ENCODE measurements at regions of chr11 and their contacts with region 1.

Region 1: GRCh38 chr11:129364143-129364654 is 11.4 kb upstream of the BARX2 start:
- DNase-seq: peak; percentile 96
- ATAC-seq: peak; percentile 90
- H3K4me3 ChIP-seq: peak overlapping the region; percentile 33; the same call in 1 of the 2 replicates
- H3K27ac ChIP-seq: no peak overlapping the region
- H3K4me1 ChIP-seq: peaks cover 31% of the 10 kb centered on the region
- H3K27me3 ChIP-seq: peaks cover 26% of the 10 kb centered on the region; the same call in 1 of the 2 replicates
- CTCF ChIP-seq: peak; percentile 100

Region 2: DNA sequence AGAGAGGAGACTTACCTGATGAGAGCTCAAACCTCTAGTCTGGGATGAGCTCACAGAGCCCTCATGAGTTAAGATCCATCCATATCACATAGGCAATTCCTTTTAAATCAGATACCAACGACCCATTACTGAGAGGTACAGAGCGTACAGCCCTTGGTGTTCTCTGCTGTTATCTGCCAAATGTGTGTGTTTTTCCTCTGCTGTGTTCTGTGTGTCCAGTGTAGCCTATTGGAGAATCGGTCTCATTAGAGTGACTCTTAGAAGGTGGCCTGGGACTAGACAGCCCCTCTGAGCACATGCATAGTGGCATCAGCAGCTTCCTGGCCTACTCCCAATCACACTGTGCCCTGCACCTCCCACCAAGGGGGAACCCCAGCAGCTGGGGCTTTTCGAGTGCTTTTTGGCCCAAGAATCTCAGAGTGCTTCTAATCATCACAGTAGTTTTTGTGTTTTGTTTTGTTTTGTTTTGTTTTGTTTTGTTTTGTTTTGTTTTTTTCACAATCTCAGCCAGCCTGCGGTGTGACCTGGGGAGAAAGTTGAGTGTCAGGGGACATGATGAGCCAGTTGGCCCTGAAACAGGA is 447.0 kb before region 1 on chr11:
- CTCF ChIA-PET with region 1: no interaction called
- POLR2A ChIA-PET with region 1: no interaction called
- intact Hi-C with region 1: no loop called
- DNase-seq: no peak
- ATAC-seq: no peak
- H3K4me3 ChIP-seq: no peak overlapping the region
- H3K27ac ChIP-seq: no peak overlapping the region
- H3K4me1 ChIP-seq: no peaks in the 10 kb centered on the region
- H3K27me3 ChIP-seq: peaks cover 37% of the 10 kb centered on the region
- CTCF ChIP-seq: no peak

Region 3: GRCh38 chr11:129333873-129334272 is 30.3 kb before region 1 on chr11:
- CTCF ChIA-PET with region 1: no interaction called
- POLR2A ChIA-PET with region 1: no interaction called
- intact Hi-C with region 1: no loop called
- DNase-seq: peak; percentile 30
- ATAC-seq: no peak
- H3K4me3 ChIP-seq: no peak overlapping the region
- H3K27ac ChIP-seq: no peak overlapping the region
- H3K4me1 ChIP-seq: peaks cover 11% of the 10 kb centered on the region; the same call in 1 of the 2 replicates
- H3K27me3 ChIP-seq: no peaks in the 10 kb centered on the region
- CTCF ChIP-seq: peak; percentile 39; the same call in 1 of the 2 replicates

Region 4: GRCh38 chr11:129639300-129639699 is 275.1 kb after region 1 on chr11:
- CTCF ChIA-PET with region 1: interaction called, 3 read pairs
- POLR2A ChIA-PET with region 1: interaction called, 4 read pairs
- intact Hi-C with region 1: loop called (anchors 2 kb)
- DNase-seq: peak; percentile 99
- ATAC-seq: peak; percentile 65
- H3K4me3 ChIP-seq: 0 out of 2 replicates have a peak overlapping the region, but pooled peaks have one; percentile 13
- H3K27ac ChIP-seq: peak overlapping the region; percentile 92
- H3K4me1 ChIP-seq: peaks cover 68% of the 10 kb centered on the region
- H3K27me3 ChIP-seq: no peaks in the 10 kb centered on the region
- CTCF ChIP-seq: no peak

Region 5: DNA sequence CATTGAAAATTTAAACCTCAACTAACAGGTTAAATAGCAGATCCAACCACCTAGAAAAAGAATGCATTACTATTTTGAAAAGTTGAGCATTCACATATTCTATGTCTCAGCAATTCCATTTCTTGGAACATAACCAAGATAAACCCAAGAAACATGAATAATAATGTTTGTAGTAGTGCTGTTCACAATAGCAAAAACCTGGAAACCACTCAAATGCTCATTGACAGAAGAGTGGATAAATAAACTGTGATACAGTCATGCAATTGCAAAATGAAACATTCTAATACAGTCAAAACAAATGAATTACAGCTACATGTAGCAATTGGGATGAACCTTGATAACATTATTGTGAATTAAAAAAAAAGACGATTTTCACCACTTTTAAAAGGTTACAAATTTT is 288.6 kb after region 1 on chr11:
- CTCF ChIA-PET with region 1: no interaction called
- POLR2A ChIA-PET with region 1: no interaction called
- intact Hi-C with region 1: loop called (anchors 2 kb)
- DNase-seq: peak; percentile 98
- ATAC-seq: peak; percentile 99
- H3K4me3 ChIP-seq: no peak overlapping the region
- H3K27ac ChIP-seq: peak overlapping the region; percentile 22
- H3K4me1 ChIP-seq: peaks cover 16% of the 10 kb centered on the region
- H3K27me3 ChIP-seq: no peaks in the 10 kb centered on the region
- CTCF ChIP-seq: no peak

Region 6: GRCh38 chr11:129853518-129854236 is 489.5 kb after region 1 on chr11:
- CTCF ChIA-PET with region 1: no interaction called
- POLR2A ChIA-PET with region 1: no interaction called
- intact Hi-C with region 1: loop called (anchors 5 kb)
- DNase-seq: peak; percentile 99
- ATAC-seq: peak; percentile 78
- H3K4me3 ChIP-seq: peak overlapping the region; percentile 3; the same call in 1 of the 2 replicates
- H3K27ac ChIP-seq: peak overlapping the region; percentile 95
- H3K4me1 ChIP-seq: peaks cover 49% of the 10 kb centered on the region
- H3K27me3 ChIP-seq: no peaks in the 10 kb centered on the region
- CTCF ChIP-seq: no peak